AG04449 (cell line): ENCODE measurements at regions of chr4 and their contacts with region 1.

Region 1: GRCh38 chr4:153127760-153128494 is 76.3 kb upstream of the TRIM2 start:
- DNase-seq: no peak
- H3K4me3 ChIP-seq: no peak overlapping the region; the same call in 1 of the 2 replicates
- CTCF ChIP-seq: peak; percentile 74

Region 2: DNA sequence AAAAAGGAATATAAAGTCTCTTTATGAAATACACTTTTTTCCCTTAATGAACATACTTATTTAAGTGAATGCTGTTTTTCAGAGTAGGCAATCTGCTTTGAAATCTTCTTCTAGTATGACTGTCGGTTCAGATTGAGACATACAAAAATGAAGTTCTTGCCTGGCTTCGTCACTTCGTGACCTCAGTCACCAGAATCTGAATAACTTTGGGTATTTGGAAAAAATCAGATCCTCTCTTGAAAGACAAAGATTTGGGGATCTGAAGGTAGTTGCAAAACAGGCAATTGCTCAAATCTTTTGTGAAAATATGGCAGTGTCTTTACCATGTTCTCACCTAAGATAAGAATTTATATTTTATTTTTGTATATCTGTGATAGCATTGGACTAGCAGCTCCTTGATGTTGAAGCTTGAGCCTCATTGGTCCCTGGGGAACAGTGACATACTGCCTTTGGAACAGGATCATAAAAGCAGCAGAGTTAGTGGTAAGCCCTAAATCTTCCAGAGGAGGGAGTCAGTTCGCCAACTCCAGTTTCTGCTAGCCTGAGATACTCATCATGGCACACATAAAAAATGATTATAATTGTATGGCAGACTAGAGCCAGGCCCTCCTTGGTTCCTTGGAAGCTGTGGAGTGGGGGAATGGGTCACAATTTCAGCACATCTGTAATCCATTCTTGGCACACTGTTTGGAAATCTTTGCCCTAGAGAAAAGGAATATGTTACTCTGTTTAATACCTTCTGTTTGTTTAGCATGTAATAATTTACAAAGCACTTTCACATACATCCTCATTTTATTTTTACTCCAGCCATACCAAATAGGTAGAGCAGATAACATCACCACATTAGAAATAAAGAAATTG is 343.2 kb before region 1 on chr4:
- CTCF ChIA-PET with region 1: interaction called, 19 read pairs
- POLR2A ChIA-PET with region 1: no interaction called
- DNase-seq: no peak
- H3K4me3 ChIP-seq: no peak overlapping the region
- CTCF ChIP-seq: no peak

Region 3: DNA sequence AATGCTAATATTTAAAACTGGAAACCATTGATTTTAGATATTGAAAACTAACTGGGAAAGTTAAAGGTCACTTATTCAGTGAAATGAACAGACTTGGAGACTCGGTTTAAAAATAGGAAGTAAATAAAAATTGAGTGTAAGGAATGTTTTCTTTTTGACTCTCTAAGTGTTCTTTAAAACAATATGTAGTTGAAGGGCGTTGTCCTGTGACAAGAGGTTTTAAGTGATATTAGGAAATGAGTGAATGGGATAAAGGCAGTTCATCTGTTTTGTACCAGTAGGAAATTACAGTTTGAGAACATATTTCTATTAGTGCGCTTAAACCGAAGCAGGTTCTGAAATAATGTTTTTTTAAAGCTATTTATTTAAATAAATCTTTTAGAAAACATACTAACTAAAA is 271.0 kb before region 1 on chr4:
- CTCF ChIA-PET with region 1: interaction called, 30 read pairs
- POLR2A ChIA-PET with region 1: no interaction called
- DNase-seq: no peak
- H3K4me3 ChIP-seq: no peak overlapping the region
- CTCF ChIP-seq: no peak

Region 4: DNA sequence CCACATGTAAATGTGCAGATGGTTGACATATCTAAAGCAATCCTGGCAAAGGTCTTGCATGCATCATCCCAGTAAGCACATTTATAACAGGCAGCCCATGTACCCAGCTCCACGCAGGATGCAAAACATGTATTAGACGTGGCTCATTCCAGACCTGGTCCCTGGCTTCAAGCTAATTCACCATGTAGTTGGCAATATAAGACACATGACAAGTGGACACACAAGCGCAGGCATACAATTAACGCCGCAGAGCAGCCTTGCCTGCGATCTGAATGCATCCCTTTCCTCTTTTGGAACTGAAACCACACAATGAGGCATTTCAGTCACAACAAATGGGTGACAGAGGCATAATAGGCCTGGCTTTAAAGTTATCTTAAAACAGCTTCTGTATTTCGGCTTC is 38.2 kb before region 1 on chr4:
- CTCF ChIA-PET with region 1: interaction called, 319 read pairs
- POLR2A ChIA-PET with region 1: no interaction called
- DNase-seq: no peak
- H3K4me3 ChIP-seq: no peak overlapping the region
- CTCF ChIP-seq: no peak

Region 5: DNA sequence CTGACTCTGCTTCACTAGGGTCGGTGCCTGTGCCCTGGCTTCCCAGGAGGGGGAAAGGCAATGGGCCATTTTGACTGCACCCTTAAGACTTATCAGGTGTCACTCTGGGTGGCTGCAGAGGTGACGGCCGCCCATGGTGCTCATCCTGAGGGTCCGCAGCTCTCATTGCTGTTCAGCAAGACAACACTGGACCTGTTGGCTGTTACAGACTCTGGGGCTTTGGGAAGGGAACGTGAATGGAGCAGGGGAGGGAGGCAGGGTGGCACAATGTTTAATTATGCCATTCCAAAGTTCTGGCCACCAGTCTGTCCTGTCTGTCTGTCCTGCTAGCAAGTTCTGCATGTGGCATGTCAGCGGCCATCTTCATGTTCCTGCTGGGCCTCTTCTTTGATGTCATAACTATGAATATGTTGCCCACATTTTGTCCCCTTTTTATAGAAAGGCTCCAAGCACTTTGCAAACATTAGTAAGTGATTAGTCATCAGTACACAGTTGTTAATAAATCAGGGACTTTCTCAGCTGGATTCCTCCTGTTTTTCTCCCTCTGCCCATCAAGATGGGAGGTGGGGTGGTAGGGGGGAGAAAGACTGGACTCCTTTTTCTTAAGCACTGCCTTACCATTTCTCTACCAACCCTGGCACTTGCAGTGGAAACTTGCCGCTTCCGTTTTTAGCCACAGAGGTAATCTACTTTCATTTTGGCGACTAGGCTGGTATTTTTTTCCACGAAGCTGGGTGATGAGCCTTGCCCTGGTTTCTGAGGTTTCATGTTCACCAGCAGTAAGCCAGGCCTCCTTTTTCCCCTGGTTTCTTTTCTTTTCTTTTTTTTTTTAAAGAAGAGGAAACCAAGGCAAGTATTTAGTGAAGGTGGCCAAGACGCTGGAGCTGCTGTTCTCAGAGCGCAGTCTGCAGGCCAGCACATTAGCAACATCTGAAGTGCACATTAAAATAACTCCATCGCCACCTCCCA is 12.3 kb before region 1 on chr4:
- CTCF ChIA-PET with region 1: interaction called, 92 read pairs
- POLR2A ChIA-PET with region 1: no interaction called
- DNase-seq: peak; percentile 44
- H3K4me3 ChIP-seq: peak overlapping the region; percentile 40
- CTCF ChIP-seq: no peak